ENCODE measurements at regions of chr14 and their contacts with region 1.

Region 1: GRCh38 chr14:91286530-91286937 is 42.0 kb upstream of the GPR68 start:
- DNase-seq: peak; percentile 79
- ATAC-seq: peak; percentile 79
- H3K4me3 ChIP-seq: no peak overlapping the region
- H3K4me3 Mint-ChIP-seq: no peak overlapping the region
- H3K27ac ChIP-seq: no peak overlapping the region
- H3K27ac Mint-ChIP-seq: peak overlapping the region; percentile 72
- H3K4me1 ChIP-seq: peaks cover 20 to 21% of the 10 kb centered on the region in 2 donors
- H3K4me1 Mint-ChIP-seq: peaks cover 23% of the 10 kb centered on the region
- H3K27me3 ChIP-seq: no peaks in the 10 kb centered on the region
- H3K27me3 Mint-ChIP-seq: no peaks in the 10 kb centered on the region
- CTCF ChIP-seq: peak; percentile 96

Region 2: GRCh38 chr14:90985601-90986242 is 300.8 kb before region 1 on chr14:
- CTCF ChIA-PET with region 1: interaction called, 4 read pairs
- POLR2A ChIA-PET with region 1: no interaction called
- intact Hi-C with region 1: loop called (anchors 5 kb)
- DNase-seq: peak; percentile 45
- ATAC-seq: peak; percentile 31
- H3K4me3 ChIP-seq: no peak overlapping the region
- H3K4me3 Mint-ChIP-seq: no peak overlapping the region
- H3K27ac ChIP-seq: no peak overlapping the region
- H3K27ac Mint-ChIP-seq: no peak overlapping the region
- H3K4me1 ChIP-seq: peaks cover 13% of the 10 kb centered on the region in 2 donors
- H3K4me1 Mint-ChIP-seq: peaks cover 17% of the 10 kb centered on the region
- H3K27me3 ChIP-seq: no peaks in the 10 kb centered on the region
- H3K27me3 Mint-ChIP-seq: no peaks in the 10 kb centered on the region
- CTCF ChIP-seq: peak; percentile 4

Region 3: DNA sequence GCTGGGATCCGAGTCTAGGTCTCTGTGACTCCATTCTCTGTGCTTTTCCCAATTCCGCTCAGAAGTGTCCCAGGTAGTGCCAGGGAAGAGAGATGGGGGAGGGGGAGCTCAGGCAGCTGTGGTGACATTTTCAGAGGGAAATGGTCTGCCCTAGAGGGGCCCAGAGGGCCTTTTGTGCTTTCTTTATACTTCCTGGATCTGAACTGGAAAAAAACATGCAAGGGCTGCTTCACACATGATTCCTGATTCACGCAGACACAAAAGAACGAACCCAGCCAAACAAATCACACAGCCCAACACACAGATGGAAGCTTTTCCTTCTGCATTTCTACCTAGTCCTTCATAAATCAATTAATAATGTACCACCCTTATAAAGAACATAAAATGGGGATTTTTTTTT is 68.5 kb before region 1 on chr14:
- CTCF ChIA-PET with region 1: interaction called, 14 read pairs
- POLR2A ChIA-PET with region 1: no interaction called
- intact Hi-C with region 1: no loop called
- DNase-seq: no peak
- ATAC-seq: no peak
- H3K4me3 ChIP-seq: no peak overlapping the region
- H3K4me3 Mint-ChIP-seq: no peak overlapping the region
- H3K27ac ChIP-seq: no peak overlapping the region
- H3K27ac Mint-ChIP-seq: no peak overlapping the region
- H3K4me1 ChIP-seq: no peaks in the 10 kb centered on the region
- H3K4me1 Mint-ChIP-seq: no peaks in the 10 kb centered on the region
- H3K27me3 ChIP-seq: no peaks in the 10 kb centered on the region
- H3K27me3 Mint-ChIP-seq: no peaks in the 10 kb centered on the region
- CTCF ChIP-seq: no peak

Region 4: DNA sequence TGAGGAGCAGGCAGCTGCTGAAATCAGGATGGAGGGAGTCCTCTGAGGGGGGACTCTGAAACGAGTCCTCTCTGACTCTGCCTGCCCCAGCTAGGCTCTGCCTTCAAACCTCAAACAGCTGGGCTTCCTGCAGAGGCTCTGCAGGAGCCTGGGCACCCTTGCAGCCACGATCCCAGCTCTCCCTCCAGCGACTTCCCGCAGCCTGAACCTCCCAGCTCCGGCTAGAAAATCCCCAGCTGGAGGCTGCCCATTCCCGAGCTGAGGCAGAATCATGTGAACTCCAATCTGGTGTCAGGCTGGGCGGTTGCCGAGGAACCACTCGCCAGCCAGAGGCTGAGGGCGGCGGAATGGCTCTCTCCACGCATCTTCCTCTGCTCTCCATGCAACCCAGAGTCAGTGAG is 42.0 kb before region 1 on chr14 and contains the start of gene GPR68:
- CTCF ChIA-PET with region 1: interaction called, 8 read pairs
- POLR2A ChIA-PET with region 1: interaction called, 3 read pairs
- intact Hi-C with region 1: loop called (anchors 5 kb)
- DNase-seq: no peak
- ATAC-seq: no peak
- H3K4me3 ChIP-seq: peak within 1 kb of the TSS in 2 of 5 experiments; percentile 30 to 37
- H3K4me3 Mint-ChIP-seq: peak within 1 kb of the TSS; percentile 75
- H3K27ac ChIP-seq: peak within 1 kb of the TSS; percentile 57 to 79
- H3K27ac Mint-ChIP-seq: peak within 1 kb of the TSS; percentile 91
- H3K4me1 ChIP-seq: peaks cover 46 to 55% of the 10 kb centered on the region in 2 donors
- H3K4me1 Mint-ChIP-seq: peaks cover 62% of the 10 kb centered on the region
- H3K27me3 ChIP-seq: no peaks in the 10 kb centered on the region
- H3K27me3 Mint-ChIP-seq: no peaks in the 10 kb centered on the region
- CTCF ChIP-seq: no peak
- total RNA-seq, gene GPR68: 0.34 and 0.53 TPM in 2 replicates

Region 5: GRCh38 chr14:91373591-91374254 is 87.2 kb after region 1 on chr14:
- CTCF ChIA-PET with region 1: no interaction called
- POLR2A ChIA-PET with region 1: no interaction called
- intact Hi-C with region 1: no loop called
- DNase-seq: peak; percentile 63
- ATAC-seq: peak; percentile 54
- H3K4me3 ChIP-seq: peak overlapping the region in 3 of 5 experiments; percentile 5 to 31 (median 9)
- H3K4me3 Mint-ChIP-seq: peak overlapping the region; percentile 88
- H3K27ac ChIP-seq: peak overlapping the region; percentile 73 to 80
- H3K27ac Mint-ChIP-seq: peak overlapping the region; percentile 96
- H3K4me1 ChIP-seq: peaks cover 84 to 98% of the 10 kb centered on the region in 2 donors
- H3K4me1 Mint-ChIP-seq: peaks cover 97% of the 10 kb centered on the region
- H3K27me3 ChIP-seq: no peaks in the 10 kb centered on the region
- H3K27me3 Mint-ChIP-seq: no peaks in the 10 kb centered on the region
- CTCF ChIP-seq: no peak

Measured in B cell (primary cell).